IMR-90 (cell line): ENCODE measurements at regions of chr20 and their contacts with region 1.

Region 1: GRCh38 chr20:35039846-35040489 is 52.6 kb downstream of the TRPC4AP start:
- DNase-seq: no peak
- ATAC-seq: peak; percentile 21; the same call in 1 of the 2 replicates
- H3K4me3 ChIP-seq: no peak overlapping the region
- H3K27ac ChIP-seq: no peak overlapping the region; the same call in 1 of the 2 replicates
- H3K4me1 ChIP-seq: peaks cover 4% of the 10 kb centered on the region; the same call in 1 of the 2 replicates
- H3K27me3 ChIP-seq: no peaks in the 10 kb centered on the region
- CTCF ChIP-seq: no peak
- POLR2A ChIP-seq: no peak
- RAD21 ChIP-seq: no peak

Region 2: DNA sequence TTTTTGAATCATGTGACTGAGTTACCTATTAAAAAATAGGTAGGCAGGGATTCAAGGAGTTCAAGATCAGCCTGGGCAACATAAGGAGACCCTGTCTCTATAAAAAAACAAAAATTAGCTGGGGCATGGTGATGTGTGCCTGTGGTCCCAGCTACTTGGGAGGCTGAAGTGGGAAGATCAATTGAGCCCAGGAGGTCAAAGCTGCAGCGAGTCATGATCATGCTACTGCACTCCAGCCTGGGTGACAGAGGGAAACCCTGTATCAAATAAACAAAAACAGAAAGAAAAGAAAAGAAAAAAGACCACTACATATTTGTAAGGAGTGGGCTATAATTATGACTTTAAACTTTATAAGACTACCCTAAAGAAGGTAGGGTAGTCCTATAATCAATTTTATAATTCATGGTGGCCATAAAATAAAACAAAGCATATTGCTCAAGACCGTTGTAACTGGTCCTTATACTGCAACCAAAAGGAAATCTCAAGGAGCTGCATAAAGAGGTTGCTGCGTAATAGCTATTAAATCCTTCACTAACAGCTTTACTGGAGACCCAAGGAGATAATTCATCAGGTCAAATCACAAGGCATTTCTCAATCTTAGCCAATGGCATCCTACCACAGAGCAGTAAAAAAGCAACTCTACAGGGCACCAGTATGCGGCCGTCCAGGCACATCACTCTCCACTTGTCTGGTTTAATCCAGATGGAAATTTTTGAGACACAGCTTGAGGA is 376.6 kb before region 1 on chr20:
- CTCF ChIA-PET with region 1: no interaction called
- POLR2A ChIA-PET with region 1: no interaction called
- dilution Hi-C with region 1: no loop called
- in situ Hi-C with region 1: no loop called
- intact Hi-C with region 1: no loop called
- DNase-seq: peak; percentile 10
- ATAC-seq: peak; percentile 29; the same call in 1 of the 2 replicates
- H3K4me3 ChIP-seq: no peak overlapping the region
- H3K27ac ChIP-seq: no peak overlapping the region
- H3K4me1 ChIP-seq: peaks cover 2% of the 10 kb centered on the region; the same call in 1 of the 2 replicates
- H3K27me3 ChIP-seq: no peaks in the 10 kb centered on the region
- CTCF ChIP-seq: no peak
- POLR2A ChIP-seq: no peak
- RAD21 ChIP-seq: no peak

Region 3: DNA sequence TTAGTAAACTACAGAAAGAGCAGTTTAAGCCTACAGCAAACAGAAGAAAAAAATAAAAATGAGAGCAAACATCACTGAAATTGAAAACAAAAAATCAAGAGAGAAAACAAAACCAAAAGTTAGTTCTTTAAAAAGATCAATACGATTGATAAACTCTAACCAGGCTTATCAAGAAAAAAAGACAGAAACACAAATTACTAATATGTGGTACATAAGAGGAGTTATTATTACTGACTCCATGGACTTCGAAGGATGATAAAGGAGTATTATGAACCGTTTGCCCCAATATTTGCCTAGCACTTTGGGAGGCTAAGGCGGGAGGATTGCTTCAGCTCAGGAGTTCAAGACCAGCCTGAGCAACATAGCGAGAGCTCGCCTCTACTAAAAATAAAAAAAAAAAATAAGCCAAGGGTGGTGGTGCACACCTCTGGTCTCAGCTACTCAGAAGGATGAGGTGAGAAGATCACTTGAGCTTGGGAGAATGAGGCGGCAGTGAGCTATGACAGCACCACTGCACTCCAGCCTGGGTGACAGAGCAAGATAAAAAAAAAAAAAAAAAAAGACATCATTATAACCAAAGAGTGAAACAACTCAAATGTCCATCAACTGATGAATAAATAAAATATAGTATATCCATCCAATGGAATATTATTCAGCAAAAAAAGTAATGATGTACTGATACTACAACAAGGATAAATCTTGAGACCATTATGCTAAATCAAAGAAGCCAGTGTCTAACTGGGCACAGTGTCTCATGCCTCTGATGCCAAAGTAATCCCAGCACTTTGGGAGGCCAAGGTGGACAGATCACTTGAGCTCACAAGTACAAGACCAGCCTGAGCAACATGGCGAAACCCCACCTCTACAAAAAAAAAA is 39.7 kb after region 1 on chr20:
- CTCF ChIA-PET with region 1: no interaction called
- POLR2A ChIA-PET with region 1: no interaction called
- dilution Hi-C with region 1: no loop called
- in situ Hi-C with region 1: no loop called
- intact Hi-C with region 1: loop called (anchors 5 kb)
- DNase-seq: no peak
- ATAC-seq: no peak
- H3K4me3 ChIP-seq: no peak overlapping the region
- H3K27ac ChIP-seq: no peak overlapping the region
- H3K4me1 ChIP-seq: 0 out of 2 replicates have a peak, but pooled peaks cover 3% of the 10 kb centered on the region
- H3K27me3 ChIP-seq: no peaks in the 10 kb centered on the region
- CTCF ChIP-seq: no peak
- POLR2A ChIP-seq: no peak
- RAD21 ChIP-seq: no peak

Region 4: GRCh38 chr20:35368666-35369423 is 328.9 kb after region 1 on chr20:
- CTCF ChIA-PET with region 1: no interaction called
- POLR2A ChIA-PET with region 1: no interaction called
- dilution Hi-C with region 1: no loop called
- in situ Hi-C with region 1: no loop called
- intact Hi-C with region 1: no loop called
- DNase-seq: no peak
- ATAC-seq: peak; percentile 44; the same call in 1 of the 2 replicates
- H3K4me3 ChIP-seq: no peak overlapping the region
- H3K27ac ChIP-seq: no peak overlapping the region
- H3K4me1 ChIP-seq: peaks cover 7% of the 10 kb centered on the region
- H3K27me3 ChIP-seq: no peaks in the 10 kb centered on the region
- CTCF ChIP-seq: no peak
- POLR2A ChIP-seq: no peak
- RAD21 ChIP-seq: no peak